Prostate gland (tissue), 2 donors: ENCODE measurements at regions of chr4 and their contacts with region 1.

Region 1: DNA sequence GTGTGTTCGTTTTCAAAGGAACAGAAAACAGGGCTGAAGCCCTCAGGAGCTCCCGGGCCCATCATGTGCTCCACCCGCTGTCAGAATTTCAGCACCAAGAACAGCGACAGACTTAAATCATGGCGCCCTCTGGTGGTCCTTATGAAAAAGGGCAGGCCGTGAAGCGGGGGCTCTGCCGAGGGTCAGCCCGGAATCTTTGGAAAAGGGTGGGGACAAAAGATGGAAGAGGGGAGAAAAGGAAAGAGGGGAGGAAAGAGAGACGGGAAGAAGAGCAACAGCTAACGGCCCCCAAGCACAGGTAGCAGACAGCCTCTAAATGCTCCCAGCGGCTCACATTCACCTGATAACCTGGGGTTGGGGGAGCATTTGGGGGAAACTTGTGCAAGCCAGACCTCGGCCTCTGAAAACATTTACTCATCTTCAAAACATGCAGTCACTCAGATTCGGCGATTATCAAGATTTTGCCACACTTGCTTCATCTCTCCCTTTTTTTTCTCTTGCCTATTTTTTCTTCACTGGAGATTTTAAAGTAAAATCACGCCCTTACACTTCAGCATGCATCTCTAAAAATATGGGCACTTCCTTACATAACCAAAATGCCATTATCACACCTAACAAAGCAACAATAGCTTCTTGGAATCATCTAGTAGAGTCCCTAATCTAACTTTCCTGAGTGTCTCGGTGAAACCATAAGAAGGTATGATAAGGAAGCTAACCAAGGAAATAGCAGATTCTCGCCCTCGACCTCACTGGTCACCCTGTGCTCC is 28.1 kb upstream of the MAN2B2 start:
- DNase-seq: peak; percentile 33
- H3K4me3 ChIP-seq: no peak overlapping the region
- H3K27ac ChIP-seq: no peak overlapping the region
- H3K4me1 ChIP-seq: no peaks in the 10 kb centered on the region
- H3K27me3 ChIP-seq: no peaks in the 10 kb centered on the region
- CTCF ChIP-seq: peak; percentile 71 to 86 (median 76)
- POLR2A ChIP-seq: no peak

Region 2: GRCh38 chr4:6250235-6250983 is 296.5 kb before region 1 on chr4:
- intact Hi-C with region 1: loop called (anchors 5 kb)
- DNase-seq: peak; percentile 67
- H3K4me3 ChIP-seq: no peak overlapping the region
- H3K27ac ChIP-seq: no peak overlapping the region
- H3K4me1 ChIP-seq: no peaks in the 10 kb centered on the region
- H3K27me3 ChIP-seq: no peaks in the 10 kb centered on the region
- CTCF ChIP-seq: peak; percentile 81 to 94 (median 89)
- POLR2A ChIP-seq: no peak

Region 3: GRCh38 chr4:6591313-6591712 is 44.4 kb after region 1 on chr4:
- intact Hi-C with region 1: no loop called
- DNase-seq: no peak
- H3K4me3 ChIP-seq: no peak overlapping the region
- H3K27ac ChIP-seq: no peak overlapping the region
- H3K4me1 ChIP-seq: no peaks in the 10 kb centered on the region
- H3K27me3 ChIP-seq: no peaks in the 10 kb centered on the region
- CTCF ChIP-seq: no peak
- POLR2A ChIP-seq: no peak

Region 4: DNA sequence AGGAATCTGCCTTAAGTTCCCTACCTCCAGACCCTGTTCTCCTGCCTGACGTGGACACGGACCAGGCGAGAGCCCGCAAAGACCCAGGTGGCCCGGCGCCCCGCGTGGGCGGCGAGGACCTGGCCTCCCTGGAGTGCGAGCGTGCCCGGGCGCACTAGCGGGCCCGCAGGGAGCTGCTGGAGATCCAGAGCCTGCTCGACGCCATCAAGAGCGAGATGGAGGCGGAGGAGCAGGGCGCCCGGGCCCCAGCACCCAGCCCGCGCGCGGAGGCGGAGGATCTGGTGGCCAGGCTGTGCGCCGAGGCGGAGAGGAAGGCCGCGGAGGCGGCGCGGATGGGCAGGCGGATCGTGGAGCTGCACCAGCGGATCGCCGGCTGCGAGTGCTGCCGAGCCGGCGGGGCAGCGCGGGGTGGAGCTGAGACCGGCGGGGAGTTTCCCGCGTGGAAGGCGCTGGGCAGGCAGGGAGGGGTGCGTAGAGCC is 111.8 kb after region 1 on chr4:
- intact Hi-C with region 1: no loop called
- DNase-seq: no peak
- H3K4me3 ChIP-seq: peak overlapping the region; percentile 24 to 28
- H3K27ac ChIP-seq: peak overlapping the region; percentile 44 to 49
- H3K4me1 ChIP-seq: no peaks in the 10 kb centered on the region
- H3K27me3 ChIP-seq: no peaks in the 10 kb centered on the region
- CTCF ChIP-seq: no peak
- POLR2A ChIP-seq: no peak